Activated B cell treated with CpG ODN at 0.5 μM for 24 hours (primary cell): ENCODE measurements at regions of chr19 and their contacts with region 1.

Region 1: DNA sequence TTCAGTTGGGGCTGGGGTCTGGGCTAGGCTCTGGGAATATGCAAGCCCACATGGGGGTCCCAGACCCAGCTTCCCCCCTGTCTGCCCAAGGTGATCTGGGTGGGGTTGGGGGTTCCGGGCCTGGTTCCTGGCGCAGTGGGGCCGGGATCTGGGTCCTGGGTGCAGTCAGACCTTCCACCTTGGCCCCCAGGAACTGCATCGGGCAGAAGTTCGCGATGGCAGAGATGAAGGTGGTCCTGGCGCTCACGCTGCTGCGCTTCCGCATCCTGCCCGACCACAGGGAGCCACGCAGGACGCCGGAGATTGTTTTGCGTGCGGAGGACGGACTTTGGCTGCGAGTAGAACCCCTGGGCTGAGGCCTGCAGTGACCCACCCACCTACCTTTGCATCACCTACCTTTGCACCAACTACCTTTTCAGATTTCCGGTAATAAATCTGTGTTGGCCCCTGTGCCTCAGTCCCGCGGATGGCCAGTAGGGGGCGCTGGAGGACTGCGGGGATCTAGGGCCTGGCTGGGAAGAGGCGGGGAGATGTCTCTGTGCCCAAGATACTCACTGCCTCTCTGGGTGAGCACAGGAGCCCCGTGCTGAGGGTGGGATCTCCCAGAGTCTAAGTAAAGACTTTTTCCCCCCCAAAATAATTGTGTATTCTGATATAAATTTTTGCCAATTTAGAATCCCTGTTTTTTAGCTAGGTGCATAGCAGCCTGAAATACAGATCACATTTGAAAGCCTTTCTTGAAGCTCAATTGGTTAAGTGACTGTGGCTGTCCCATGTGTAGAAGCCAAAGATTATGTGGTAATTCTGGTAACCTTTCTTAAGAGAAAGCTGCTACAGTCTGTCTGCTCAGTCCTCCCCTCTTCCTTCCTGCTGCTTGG is 11.5 kb upstream of the CYP4F3 start:
- DNase-seq: peak; percentile 78
- ATAC-seq: peak; percentile 98
- H3K4me3 Mint-ChIP-seq: no peak overlapping the region
- H3K27ac Mint-ChIP-seq: no peak overlapping the region
- H3K4me1 Mint-ChIP-seq: peaks cover 11% of the 10 kb centered on the region
- H3K27me3 Mint-ChIP-seq: peaks cover 9% of the 10 kb centered on the region
- CTCF ChIP-seq: no peak

Region 2: DNA sequence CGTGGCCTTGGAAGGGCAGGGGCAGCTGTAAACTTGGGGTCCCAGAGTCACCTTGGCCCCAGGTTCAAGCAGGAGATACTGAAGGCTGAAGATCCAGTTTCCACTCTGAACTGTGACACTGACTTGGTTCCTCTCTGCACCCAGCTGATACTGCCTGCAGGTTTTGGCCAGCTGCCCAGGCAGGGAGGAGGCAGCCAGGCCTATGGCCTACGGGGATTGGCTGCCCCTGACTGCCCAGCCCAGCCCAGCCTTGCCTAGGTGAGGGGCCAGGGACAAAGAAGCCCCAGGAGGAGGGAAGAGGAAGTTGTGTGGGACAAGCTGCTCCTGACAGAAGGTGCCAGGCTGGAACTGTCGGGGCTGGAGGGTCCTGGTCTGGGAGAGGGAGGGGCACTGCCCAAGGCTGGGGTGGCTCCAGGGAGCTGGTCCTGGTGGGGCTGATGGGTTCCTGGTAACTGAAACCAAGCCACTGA is 65.9 kb before region 1 on chr19:
- CTCF ChIA-PET with region 1: no interaction called
- POLR2A ChIA-PET with region 1: no interaction called
- intact Hi-C with region 1: no loop called
- DNase-seq: no peak
- ATAC-seq: no peak
- H3K4me3 Mint-ChIP-seq: no peak overlapping the region
- H3K27ac Mint-ChIP-seq: no peak overlapping the region
- H3K4me1 Mint-ChIP-seq: no peaks in the 10 kb centered on the region
- H3K27me3 Mint-ChIP-seq: peaks cover 26% of the 10 kb centered on the region
- CTCF ChIP-seq: no peak

Region 3: GRCh38 chr19:16051254-16052025 is 422.2 kb after region 1 on chr19:
- CTCF ChIA-PET with region 1: no interaction called
- POLR2A ChIA-PET with region 1: no interaction called
- intact Hi-C with region 1: loop called (anchors 10 kb)
- DNase-seq: no peak
- ATAC-seq: peak; percentile 87
- H3K4me3 Mint-ChIP-seq: no peak overlapping the region
- H3K27ac Mint-ChIP-seq: no peak overlapping the region
- H3K4me1 Mint-ChIP-seq: peaks cover 3% of the 10 kb centered on the region
- H3K27me3 Mint-ChIP-seq: no peaks in the 10 kb centered on the region
- CTCF ChIP-seq: no peak